ENCODE measurements at regions of chr11 and their contacts with region 1.

Region 1: GRCh38 chr11:93652161-93652597 is 9.3 kb upstream of the CEP295 start:
- DNase-seq: no peak
- H3K4me3 Mint-ChIP-seq: no peak overlapping the region
- H3K27ac Mint-ChIP-seq: no peak overlapping the region
- H3K4me1 Mint-ChIP-seq: peaks cover 29% of the 10 kb centered on the region
- H3K27me3 Mint-ChIP-seq: peaks cover 10% of the 10 kb centered on the region

Region 2: GRCh38 chr11:93234602-93235207 is 417.5 kb before region 1 on chr11:
- CTCF ChIA-PET with region 1: interaction called, 42 read pairs
- POLR2A ChIA-PET with region 1: no interaction called
- DNase-seq: peak; percentile 79
- H3K4me3 Mint-ChIP-seq: no peak overlapping the region
- H3K27ac Mint-ChIP-seq: no peak overlapping the region
- H3K4me1 Mint-ChIP-seq: no peaks in the 10 kb centered on the region
- H3K27me3 Mint-ChIP-seq: peaks cover 18% of the 10 kb centered on the region

Measured in activated CD4-positive, alpha-beta memory T cell treated with anti-CD3 and anti-CD28 coated beads, Interleukin-2, amount 10 ng/mL, durations not matched to agents 7 days and 5 days (primary cell).